ENCODE measurements at regions of chr16 and their contacts with region 1.

Region 1: GRCh38 chr16:30534368-30535105 is at the start of gene ZNF747:
- DNase-seq: peak; percentile 94
- ATAC-seq: peak; percentile 83
- H3K4me3 Mint-ChIP-seq: peak within 1 kb of the TSS; percentile 85
- H3K27ac Mint-ChIP-seq: peak within 1 kb of the TSS; percentile 95
- H3K4me1 Mint-ChIP-seq: peaks cover 42% of the 10 kb centered on the region
- H3K27me3 Mint-ChIP-seq: no peaks in the 10 kb centered on the region
- total RNA-seq, gene ZNF747: 8.9 to 10.8 TPM

Region 2: DNA sequence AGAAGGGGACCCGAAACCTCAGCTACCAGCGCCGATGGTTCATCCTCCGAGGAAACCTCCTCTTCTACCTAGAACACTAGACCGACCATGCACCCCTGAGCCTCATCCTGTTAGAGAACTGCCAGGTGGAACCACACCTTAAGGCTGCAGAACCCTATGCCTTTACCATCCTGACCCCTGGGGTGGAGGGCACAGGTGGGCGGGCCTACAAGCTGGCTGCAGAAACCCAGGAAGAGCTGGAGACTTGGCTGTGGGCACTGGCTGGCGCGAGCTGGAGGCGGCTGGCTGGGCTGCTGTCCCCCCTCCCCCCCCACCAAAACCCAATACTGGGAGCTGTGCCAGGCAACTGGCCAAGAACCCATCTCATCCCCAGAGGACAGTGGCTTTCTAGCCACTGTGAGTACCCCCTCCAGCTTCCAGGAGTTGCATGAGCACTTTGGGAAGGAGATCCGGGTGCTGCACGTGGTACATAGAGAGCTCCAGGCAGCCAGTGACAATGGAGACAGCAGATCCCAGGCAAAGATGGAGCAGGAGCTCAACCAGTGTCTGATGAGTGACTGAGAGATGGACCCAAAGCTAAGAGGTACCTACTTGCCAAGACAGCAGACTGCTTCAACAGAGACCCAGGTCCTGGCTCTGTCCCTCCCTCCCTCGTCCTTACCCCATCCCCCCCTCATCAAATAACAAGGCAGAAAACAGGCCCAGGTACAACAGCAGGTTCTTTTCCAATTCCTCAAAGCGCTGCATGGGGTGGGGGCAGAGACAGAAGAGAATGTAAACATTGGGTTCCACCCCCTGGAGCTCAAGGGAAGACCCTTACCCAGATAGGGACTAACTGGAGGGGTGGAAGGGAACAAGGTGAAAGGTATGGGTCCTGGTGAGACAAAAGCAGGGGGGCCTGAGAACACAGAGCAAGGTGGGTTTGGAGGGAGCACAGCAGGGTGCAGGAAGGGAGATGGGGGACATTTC is 177.9 kb before region 1 on chr16:
- CTCF ChIA-PET with region 1: no interaction called
- POLR2A ChIA-PET with region 1: no interaction called
- DNase-seq: no peak
- ATAC-seq: no peak
- H3K4me3 Mint-ChIP-seq: peak overlapping the region; percentile 95
- H3K27ac Mint-ChIP-seq: peak overlapping the region; percentile 89
- H3K4me1 Mint-ChIP-seq: peaks cover 49% of the 10 kb centered on the region
- H3K27me3 Mint-ChIP-seq: no peaks in the 10 kb centered on the region

Region 3: DNA sequence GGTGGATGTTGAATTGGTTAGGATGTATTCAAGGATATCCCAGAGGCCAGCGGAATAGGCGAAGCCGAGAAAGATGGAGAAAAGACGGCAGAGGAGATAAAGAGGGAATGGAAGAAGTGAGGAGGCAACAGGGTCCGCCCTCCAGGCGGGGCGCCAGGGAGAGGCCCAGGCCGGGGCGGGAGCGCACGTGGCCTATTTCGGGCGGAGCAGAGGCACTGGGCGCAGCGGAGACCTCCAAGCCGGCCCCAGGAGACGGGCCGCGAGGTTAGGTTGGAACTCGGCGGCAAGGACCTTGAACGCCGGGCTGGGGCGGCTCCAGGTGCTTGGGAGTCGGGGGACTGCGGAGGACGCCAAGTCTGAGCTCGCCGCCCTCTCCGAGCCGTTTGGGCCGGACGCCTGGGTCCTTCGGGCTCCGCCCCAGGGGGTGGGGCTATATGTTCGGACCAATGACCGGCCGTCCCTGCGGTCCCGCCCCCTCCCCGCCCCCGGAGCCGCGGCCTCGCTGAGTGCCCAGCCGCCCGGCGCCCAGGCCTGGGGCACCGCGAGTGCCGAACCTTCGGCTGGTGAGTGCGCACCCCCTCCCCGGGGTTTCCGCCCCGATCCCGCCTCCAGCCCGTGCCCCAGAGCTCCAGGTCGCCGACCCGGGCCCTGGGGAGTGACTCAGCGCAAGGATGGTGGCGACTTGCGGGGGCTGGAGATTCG is 127.3 kb before region 1 on chr16 and contains the start of gene ZNF771:
- CTCF ChIA-PET with region 1: interaction called, 10 read pairs
- POLR2A ChIA-PET with region 1: interaction called, 3 read pairs
- DNase-seq: peak; percentile 93
- ATAC-seq: peak; percentile 91
- H3K4me3 Mint-ChIP-seq: peak within 1 kb of the TSS; percentile 83
- H3K27ac Mint-ChIP-seq: peak within 1 kb of the TSS; percentile 91
- H3K4me1 Mint-ChIP-seq: peaks cover 29% of the 10 kb centered on the region
- H3K27me3 Mint-ChIP-seq: peaks cover 11% of the 10 kb centered on the region
- total RNA-seq, gene ZNF771: 3.3 to 3.9 TPM

Region 4: DNA sequence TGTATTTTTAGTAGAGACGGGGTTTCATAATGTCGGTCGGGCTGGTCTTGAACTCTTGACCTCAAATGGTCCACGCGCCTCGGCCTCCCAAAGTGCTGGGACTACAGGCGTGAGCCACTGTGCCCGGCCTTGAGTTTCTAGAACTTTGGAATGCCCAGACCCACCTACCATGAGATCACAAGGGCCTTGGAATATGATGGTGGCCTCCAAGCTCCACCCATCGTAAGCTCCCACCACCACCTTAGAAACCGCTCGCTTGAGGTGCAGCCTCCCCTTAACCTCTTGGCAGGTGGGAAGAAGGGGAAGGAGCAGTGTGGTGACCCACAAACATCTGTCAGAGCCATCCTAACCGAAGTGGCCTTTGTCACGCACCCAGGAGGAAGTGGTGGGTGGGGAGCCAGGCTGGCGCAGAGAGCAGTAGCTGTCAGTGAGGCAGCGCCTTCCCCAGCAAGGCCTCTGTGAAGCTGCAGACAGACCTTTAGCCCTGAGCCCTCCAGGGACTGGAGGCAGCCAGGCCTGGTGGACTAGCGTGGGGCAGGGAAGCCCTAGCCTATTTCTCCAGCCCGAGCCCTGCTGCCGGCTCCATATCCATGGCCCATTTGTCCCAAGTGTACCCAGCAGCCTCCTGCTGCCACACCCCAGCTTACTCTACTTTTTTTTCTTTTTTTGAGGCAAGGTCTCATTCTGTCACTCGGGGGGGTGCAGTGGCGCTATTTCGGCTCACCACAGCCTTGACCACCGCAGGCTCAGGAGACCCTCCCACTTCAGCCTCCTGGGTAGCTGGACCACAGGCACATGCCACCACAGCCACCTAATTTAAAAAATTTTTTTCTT is 75.8 kb before region 1 on chr16:
- CTCF ChIA-PET with region 1: interaction called, 10 read pairs
- POLR2A ChIA-PET with region 1: no interaction called
- DNase-seq: peak; percentile 95
- ATAC-seq: peak; percentile 97
- H3K4me3 Mint-ChIP-seq: peak overlapping the region; percentile 71
- H3K27ac Mint-ChIP-seq: peak overlapping the region; percentile 98
- H3K4me1 Mint-ChIP-seq: peaks cover 74% of the 10 kb centered on the region
- H3K27me3 Mint-ChIP-seq: no peaks in the 10 kb centered on the region

Region 5: DNA sequence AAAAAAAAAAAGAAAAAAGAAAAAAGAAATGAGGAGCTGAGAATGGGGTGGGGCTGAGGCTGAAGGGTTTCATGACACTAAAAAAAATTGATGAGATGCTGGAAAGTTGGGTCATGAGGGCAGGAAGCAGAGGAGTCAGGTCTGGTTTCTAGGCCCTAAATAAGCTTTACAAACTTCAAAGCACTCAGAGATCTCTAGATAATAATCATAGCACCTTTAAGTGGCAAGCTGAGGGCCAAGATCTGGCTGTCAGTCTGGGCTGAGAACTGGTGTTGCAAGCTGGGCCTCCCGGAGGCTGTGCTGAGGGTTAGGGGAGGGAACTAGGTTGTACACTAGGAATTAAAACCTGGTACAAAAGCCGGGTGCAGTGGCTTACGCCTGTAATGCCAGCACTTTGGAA is 17.2 kb after region 1 on chr16:
- CTCF ChIA-PET with region 1: interaction called, 76 read pairs
- POLR2A ChIA-PET with region 1: interaction called, 80 read pairs
- DNase-seq: peak; percentile 78
- ATAC-seq: peak; percentile 94
- H3K4me3 Mint-ChIP-seq: peak overlapping the region; percentile 64
- H3K27ac Mint-ChIP-seq: peak overlapping the region; percentile 95
- H3K4me1 Mint-ChIP-seq: peaks cover 56% of the 10 kb centered on the region
- H3K27me3 Mint-ChIP-seq: no peaks in the 10 kb centered on the region

Region 6: DNA sequence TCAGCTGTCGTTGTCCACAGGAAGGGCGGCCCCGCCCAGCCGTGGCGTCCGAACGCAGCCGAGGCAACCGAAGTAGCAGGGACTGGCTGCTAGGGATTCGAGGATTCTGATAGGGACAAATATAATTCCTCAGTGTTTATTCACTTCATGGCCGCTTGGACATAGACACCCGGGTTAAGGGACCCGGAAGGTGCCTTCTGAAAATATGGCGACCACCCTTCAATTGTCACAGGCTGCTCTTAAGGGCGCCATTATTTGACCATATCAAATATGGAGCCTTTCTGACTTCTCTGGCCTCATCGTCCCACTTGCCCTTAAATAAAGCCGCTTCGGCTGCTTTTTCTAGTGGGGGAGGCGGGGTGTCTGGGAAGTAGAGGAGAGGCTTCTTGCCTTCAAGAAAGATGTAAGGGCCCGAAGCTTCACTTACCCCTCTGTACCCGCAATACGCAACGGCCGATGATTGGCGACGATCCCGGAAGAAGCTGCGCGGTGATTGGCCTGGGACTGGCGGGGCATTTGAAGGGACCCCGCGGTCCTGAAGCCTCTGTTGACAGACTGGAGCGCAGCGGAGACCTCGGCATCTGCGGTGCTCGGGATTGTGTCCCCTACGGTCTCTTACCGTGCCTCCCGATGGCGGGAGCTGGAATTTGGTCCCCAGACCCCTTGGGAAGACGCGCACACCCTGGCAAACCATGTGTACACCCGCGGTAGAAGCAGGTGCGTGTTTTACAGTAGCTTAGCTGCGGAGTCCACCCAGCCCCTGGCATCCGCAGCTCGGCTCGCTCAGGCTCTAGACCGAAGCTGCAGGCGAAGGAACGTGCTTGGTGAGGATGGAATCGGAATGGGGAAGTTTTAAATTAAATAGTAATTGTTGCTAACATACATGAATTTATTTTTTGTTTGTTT is 37.4 kb after region 1 on chr16 and contains the start of gene ZNF688:
- CTCF ChIA-PET with region 1: interaction called, 30 read pairs
- POLR2A ChIA-PET with region 1: interaction called, 61 read pairs
- DNase-seq: peak; percentile 98
- ATAC-seq: peak; percentile 87
- H3K4me3 Mint-ChIP-seq: peak within 1 kb of the TSS; percentile 98
- H3K27ac Mint-ChIP-seq: peak within 1 kb of the TSS; percentile 94
- H3K4me1 Mint-ChIP-seq: peaks cover 48% of the 10 kb centered on the region
- H3K27me3 Mint-ChIP-seq: no peaks in the 10 kb centered on the region
- total RNA-seq, gene ZNF688: 12.5 to 13.4 TPM

Region 7: DNA sequence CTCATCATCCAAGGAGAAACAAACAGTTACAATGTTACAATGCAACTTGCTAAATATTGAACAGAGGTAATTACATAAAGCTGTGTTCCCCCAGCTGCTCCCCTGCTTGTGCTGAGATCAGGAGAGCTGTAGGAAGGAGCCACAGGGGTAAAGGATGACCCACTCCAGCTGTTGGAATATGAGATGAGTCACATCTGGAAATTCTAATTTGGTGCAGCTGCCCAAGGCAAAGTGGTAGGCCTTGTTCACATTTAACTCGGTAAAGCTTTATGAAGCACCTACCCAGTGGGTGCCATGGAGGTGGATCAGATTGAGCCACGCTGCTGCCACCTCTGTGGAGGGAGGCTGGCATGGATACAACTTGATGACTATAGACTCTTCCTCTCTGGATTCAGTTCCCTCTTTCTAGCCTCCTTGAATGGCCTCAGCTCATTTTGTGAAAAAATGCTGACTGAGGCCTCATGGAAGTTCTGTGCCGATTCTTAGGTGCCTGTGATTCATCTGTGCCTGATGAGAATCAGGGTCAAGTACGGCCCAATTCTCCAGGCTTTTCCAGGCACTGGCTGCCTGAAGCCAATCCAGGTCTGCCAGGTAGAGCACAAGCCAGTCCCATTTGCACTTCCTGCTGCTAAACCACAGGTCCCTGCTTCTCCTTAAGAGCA is 68.2 kb after region 1 on chr16:
- CTCF ChIA-PET with region 1: interaction called, 40 read pairs
- POLR2A ChIA-PET with region 1: interaction called, 3 read pairs
- DNase-seq: no peak
- ATAC-seq: no peak
- H3K4me3 Mint-ChIP-seq: no peak overlapping the region
- H3K27ac Mint-ChIP-seq: no peak overlapping the region
- H3K4me1 Mint-ChIP-seq: peaks cover 17% of the 10 kb centered on the region
- H3K27me3 Mint-ChIP-seq: no peaks in the 10 kb centered on the region

Region 8: GRCh38 chr16:30615358-30616091 is 81.0 kb after region 1 on chr16:
- CTCF ChIA-PET with region 1: interaction called, 22 read pairs
- POLR2A ChIA-PET with region 1: interaction called, 25 read pairs
- DNase-seq: peak; percentile 83
- ATAC-seq: peak; percentile 68
- H3K4me3 Mint-ChIP-seq: no peak overlapping the region
- H3K27ac Mint-ChIP-seq: no peak overlapping the region
- H3K4me1 Mint-ChIP-seq: peaks cover 14% of the 10 kb centered on the region
- H3K27me3 Mint-ChIP-seq: peaks cover 13% of the 10 kb centered on the region